ENCODE measurements at regions of chr7 and their contacts with region 1.

Region 1: GRCh38 chr7:584122-584465 is 64.4 kb upstream of the PDGFA start:
- DNase-seq: no peak
- ATAC-seq: no peak
- H3K4me3 ChIP-seq: no peak overlapping the region
- H3K27ac ChIP-seq: no peak overlapping the region
- H3K4me1 ChIP-seq: no peaks in the 10 kb centered on the region
- H3K27me3 ChIP-seq: no peaks in the 10 kb centered on the region
- CTCF ChIP-seq: no peak

Region 2: DNA sequence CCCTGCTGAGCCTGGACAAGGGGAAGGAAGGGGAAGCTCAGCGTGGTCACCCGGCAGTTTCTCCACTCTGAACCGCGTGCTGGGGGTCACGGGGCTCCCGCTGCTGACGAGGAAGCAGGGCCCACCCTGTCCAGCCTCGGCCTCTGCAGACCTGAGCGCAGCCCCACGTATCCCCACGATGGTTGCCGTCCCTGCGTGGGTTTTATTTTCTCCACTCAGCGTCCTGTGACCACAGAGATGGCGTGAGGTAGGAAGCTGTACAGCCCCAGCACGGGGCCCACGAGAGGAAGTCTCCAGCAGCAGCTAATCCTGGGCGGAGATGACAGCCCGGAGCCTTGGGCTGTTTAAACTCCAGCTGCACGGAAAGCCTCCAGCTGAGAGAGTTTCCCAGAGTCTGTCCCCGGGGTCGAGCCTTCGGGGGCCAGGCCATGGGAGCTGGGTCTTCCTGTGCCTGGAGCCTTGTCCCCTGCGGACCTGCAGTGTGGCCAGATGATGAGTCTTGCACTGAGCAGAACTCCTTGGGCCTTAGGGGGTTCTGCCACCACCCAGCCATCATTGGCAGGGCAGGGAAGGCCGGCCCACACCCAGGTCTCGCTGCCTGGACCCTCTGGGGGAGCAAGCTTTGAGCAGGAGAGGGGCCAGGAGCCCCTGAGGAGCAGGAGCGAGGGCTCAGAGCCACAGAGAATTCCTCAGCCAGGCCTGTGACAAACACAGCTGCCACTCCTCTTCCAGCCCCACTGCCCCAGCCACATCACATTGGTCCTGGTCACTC is 464.5 kb before region 1 on chr7:
- CTCF ChIA-PET with region 1: no interaction called
- POLR2A ChIA-PET with region 1: no interaction called
- intact Hi-C with region 1: no loop called
- DNase-seq: no peak
- ATAC-seq: peak; percentile 44
- H3K4me3 ChIP-seq: no peak overlapping the region
- H3K27ac ChIP-seq: no peak overlapping the region
- H3K4me1 ChIP-seq: no peaks in the 10 kb centered on the region
- H3K27me3 ChIP-seq: no peaks in the 10 kb centered on the region
- CTCF ChIP-seq: no peak

Region 3: GRCh38 chr7:601595-602340 is 17.7 kb after region 1 on chr7:
- CTCF ChIA-PET with region 1: no interaction called
- POLR2A ChIA-PET with region 1: no interaction called
- intact Hi-C with region 1: loop called (anchors 2 kb)
- DNase-seq: no peak
- ATAC-seq: no peak
- H3K4me3 ChIP-seq: no peak overlapping the region
- H3K27ac ChIP-seq: no peak overlapping the region
- H3K4me1 ChIP-seq: no peaks in the 10 kb centered on the region
- H3K27me3 ChIP-seq: no peaks in the 10 kb centered on the region
- CTCF ChIP-seq: no peak